Activated CD4-positive, alpha-beta T cell treated with anti-CD3 and anti-CD28 coated beads, Interleukin-2, amount 10 ng/mL, durations not matched to agents 7 days and 5 days (primary cell): ENCODE measurements at regions of chr2 and their contacts with region 1.

Region 1: DNA sequence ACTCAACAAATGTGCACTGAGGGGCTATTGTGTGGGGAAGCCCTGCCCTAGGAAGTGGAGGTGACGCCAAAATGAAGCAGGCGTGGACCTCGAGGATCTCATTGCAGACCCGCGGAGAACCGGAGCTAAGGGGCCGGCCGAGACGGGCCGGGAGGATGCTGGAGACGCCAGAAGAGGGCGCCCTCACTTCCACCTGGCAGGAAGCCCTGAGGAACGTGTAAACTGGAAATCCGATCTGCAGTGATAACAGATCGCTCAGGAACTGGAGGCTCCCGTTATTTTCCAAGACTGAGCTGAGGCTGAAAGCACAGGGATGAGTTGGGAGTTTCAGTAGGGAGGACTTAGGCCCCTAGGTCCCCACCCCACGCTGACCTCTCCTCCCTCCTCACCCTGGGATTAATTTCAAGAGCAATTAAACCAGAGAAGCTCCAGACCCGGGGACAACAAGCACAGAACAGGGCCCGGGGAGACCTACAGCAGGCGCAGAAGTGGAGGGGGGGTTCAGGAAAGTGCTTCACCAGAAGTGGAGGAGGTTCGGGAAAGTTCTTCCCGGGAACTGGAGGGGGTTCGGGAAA is 7.7 kb upstream of the COL6A3 start:
- DNase-seq: peak; percentile 77
- H3K4me3 Mint-ChIP-seq: peak overlapping the region; percentile 40
- H3K27ac Mint-ChIP-seq: peak overlapping the region; percentile 16
- H3K4me1 Mint-ChIP-seq: peaks cover 36% of the 10 kb centered on the region
- H3K27me3 Mint-ChIP-seq: peaks cover 4% of the 10 kb centered on the region

Region 2: GRCh38 chr2:237012577-237013267 is 408.9 kb before region 1 on chr2:
- CTCF ChIA-PET with region 1: no interaction called
- POLR2A ChIA-PET with region 1: no interaction called
- DNase-seq: no peak
- H3K4me3 Mint-ChIP-seq: no peak overlapping the region
- H3K27ac Mint-ChIP-seq: no peak overlapping the region
- H3K4me1 Mint-ChIP-seq: no peaks in the 10 kb centered on the region
- H3K27me3 Mint-ChIP-seq: no peaks in the 10 kb centered on the region

Region 3: GRCh38 chr2:237336131-237336530 is 85.5 kb before region 1 on chr2:
- CTCF ChIA-PET with region 1: no interaction called
- POLR2A ChIA-PET with region 1: no interaction called
- DNase-seq: no peak
- H3K4me3 Mint-ChIP-seq: no peak overlapping the region
- H3K27ac Mint-ChIP-seq: no peak overlapping the region
- H3K4me1 Mint-ChIP-seq: no peaks in the 10 kb centered on the region
- H3K27me3 Mint-ChIP-seq: no peaks in the 10 kb centered on the region

Region 4: DNA sequence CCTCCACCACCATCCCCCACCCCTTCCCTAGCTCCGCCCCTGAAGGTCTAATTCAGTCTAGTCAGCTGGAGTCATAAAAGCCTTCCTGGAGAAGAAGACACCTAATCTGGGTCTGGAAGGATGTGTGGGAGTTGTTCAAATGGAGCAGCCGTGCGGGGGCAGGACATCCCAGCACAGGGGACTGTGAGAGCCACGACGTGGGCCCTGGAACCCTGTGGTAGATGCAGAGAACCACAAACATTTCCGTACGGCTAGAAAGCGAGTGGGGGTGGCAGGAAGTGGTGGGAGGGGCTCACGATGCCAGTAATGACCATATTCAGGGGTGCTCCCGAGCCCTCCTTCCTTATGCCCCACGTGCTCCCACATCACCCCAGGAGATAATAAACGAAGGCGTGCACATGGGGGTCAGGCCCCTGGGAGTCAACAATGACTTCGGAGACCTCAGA is 13.3 kb after region 1 on chr2:
- CTCF ChIA-PET with region 1: interaction called, 20 read pairs
- POLR2A ChIA-PET with region 1: no interaction called
- DNase-seq: peak; percentile 80
- H3K4me3 Mint-ChIP-seq: peak overlapping the region; percentile 37
- H3K27ac Mint-ChIP-seq: peak overlapping the region; percentile 86
- H3K4me1 Mint-ChIP-seq: peaks cover 85% of the 10 kb centered on the region
- H3K27me3 Mint-ChIP-seq: no peaks in the 10 kb centered on the region

Region 5: GRCh38 chr2:237469849-237470248 is 48.2 kb after region 1 on chr2:
- CTCF ChIA-PET with region 1: interaction called, 56 read pairs
- POLR2A ChIA-PET with region 1: no interaction called
- DNase-seq: no peak
- H3K4me3 Mint-ChIP-seq: no peak overlapping the region
- H3K27ac Mint-ChIP-seq: no peak overlapping the region
- H3K4me1 Mint-ChIP-seq: peaks cover 6% of the 10 kb centered on the region
- H3K27me3 Mint-ChIP-seq: no peaks in the 10 kb centered on the region

Region 6: DNA sequence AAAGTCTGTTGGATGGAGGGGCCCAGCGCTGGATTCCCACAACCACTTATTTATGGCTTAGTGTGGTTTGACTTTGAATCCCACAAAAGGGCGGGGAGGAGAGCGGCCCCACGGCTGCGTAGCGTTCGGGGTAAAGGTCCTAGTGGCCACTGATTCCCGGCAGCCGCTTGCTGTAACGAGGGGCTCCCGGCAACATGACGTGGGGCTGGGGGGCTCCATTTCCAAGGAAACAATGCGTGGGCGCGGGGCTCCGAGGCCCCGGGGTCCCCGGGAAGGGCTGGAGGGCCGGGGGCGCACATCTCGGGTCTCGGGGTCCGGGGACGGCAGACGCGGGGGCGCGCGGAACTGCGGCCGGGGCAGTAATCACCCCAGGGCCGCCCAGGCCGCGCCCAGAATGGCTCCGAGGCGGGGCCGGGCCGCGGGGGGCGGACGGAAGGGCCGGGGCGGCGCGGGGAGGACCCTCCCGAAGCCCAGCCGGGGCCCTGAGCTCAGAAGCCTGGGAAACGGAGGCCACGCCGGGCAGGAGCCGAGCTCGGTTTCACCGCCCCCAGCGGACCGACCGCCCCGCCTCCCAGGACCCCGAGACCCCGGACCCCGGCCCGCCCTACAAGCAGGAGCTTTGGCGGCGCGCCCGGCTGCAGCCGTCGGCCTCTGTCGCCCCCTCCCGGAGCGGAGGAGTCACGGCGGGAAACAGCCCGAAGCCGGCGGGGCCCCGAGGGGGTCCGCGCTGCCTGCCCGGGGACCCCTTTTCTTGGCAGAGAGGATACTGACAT is 53.5 kb after region 1 on chr2:
- CTCF ChIA-PET with region 1: interaction called, 56 read pairs
- POLR2A ChIA-PET with region 1: no interaction called
- DNase-seq: peak; percentile 73
- H3K4me3 Mint-ChIP-seq: peak overlapping the region; percentile 76
- H3K27ac Mint-ChIP-seq: peak overlapping the region; percentile 88
- H3K4me1 Mint-ChIP-seq: peaks cover 11% of the 10 kb centered on the region
- H3K27me3 Mint-ChIP-seq: peaks cover 27% of the 10 kb centered on the region

Region 7: DNA sequence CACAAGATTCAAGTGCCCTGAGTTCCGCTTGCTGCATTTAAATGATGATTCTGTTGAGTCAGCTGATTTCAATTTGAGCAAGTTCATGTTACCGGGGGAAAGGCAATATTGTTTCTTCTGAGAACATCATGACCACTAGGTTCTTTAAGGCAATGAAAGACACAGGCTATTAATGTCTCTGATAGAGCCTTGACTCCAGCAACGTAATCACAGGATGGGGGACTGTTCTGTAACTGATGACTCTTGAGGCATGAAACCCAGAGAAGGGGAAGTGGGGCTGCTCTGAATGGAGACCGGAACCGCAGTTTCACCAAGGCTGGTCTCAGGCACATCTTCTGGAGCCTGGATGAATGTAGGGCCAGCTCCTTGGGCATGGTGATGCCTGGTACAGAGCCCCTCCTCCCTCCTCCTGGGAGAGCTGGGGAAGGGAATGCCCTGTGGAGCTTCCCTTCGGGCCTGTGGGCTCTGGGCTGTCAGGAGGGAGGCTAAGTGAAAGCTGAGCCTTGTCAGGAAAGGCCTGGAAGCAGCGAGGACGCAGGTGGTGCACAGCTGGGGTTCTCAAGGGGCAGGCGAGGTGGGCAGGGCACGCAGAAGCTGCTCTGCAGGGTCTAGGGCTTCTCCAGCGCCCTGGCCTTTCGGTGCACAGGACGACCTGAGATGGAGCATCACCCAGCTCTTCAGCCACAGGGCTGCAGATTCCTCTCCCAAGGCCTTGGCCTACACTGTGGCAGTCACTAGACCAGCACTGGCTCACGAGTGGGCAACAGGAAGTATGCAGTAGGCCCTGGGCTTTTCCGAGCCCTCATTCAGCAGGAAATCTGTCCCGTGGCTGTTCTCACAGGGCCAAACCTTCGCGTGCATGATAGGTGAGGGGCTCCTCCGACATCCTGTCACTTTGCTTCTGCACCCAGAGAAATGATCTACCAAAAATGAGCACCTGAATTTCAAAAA is 108.1 kb after region 1 on chr2:
- CTCF ChIA-PET with region 1: no interaction called
- POLR2A ChIA-PET with region 1: no interaction called
- DNase-seq: no peak
- H3K4me3 Mint-ChIP-seq: no peak overlapping the region
- H3K27ac Mint-ChIP-seq: no peak overlapping the region
- H3K4me1 Mint-ChIP-seq: no peaks in the 10 kb centered on the region
- H3K27me3 Mint-ChIP-seq: no peaks in the 10 kb centered on the region

Region 8: DNA sequence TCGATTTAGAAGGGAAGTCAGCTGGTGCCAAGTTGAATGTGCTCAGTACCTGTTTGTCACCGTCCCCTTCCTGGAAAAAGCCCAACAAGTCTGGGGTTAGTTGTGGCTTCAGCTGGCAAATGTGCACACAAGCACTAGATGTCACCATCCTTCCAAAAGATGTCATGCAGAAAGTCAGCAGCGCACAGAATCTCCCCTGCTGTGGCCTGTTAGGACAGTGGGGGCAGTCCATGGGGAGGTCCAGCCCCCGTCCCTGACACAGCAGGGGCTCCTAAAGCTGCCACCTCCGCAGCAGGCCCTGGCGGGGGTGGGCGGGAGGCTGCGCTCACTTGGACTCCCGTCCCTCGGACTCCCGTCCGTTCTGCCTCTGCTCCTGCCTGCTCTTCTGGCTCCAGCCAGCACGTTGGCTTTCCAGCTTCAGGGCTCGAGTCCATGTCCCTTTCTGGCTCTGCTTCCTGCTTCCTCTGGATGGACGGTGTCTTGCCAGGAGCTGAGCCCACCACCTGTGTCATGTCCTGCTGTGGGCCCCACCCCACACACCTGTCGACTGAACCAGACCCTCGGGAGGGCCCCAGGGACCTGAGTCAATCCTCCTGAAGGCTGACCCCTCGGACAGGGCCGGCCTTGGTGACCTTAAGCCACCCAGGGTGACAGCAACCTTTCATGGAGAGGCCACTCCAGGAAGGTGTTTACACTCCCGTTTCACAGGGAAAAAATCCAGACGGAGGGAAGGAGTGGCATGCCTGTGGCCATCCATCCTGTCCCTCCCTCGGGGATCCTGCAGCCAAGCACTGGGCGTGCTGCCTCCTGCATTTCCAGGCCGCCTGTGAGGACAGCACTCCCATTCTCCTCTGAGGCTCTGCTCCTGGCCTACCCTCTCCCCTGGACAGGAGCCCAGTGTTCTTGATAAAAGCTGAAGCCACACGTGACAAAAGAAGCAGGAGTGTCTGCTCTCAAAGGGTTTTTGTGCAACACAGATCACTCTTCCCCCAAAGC is 160.4 kb after region 1 on chr2:
- CTCF ChIA-PET with region 1: no interaction called
- POLR2A ChIA-PET with region 1: no interaction called
- DNase-seq: peak; percentile 57
- H3K4me3 Mint-ChIP-seq: no peak overlapping the region
- H3K27ac Mint-ChIP-seq: no peak overlapping the region
- H3K4me1 Mint-ChIP-seq: peaks cover 5% of the 10 kb centered on the region
- H3K27me3 Mint-ChIP-seq: no peaks in the 10 kb centered on the region